SK-N-SH (cell line): ENCODE measurements at regions of chr6 and their contacts with region 1.

Region 1: GRCh38 chr6:51678905-51679620 is 408.4 kb downstream of the PKHD1 start:
- DNase-seq: peak; percentile 16
- H3K4me3 ChIP-seq: no peak overlapping the region
- H3K27ac ChIP-seq: peak overlapping the region in 1 of 2 experiments; percentile 99; a peak in 2 of 4 replicates
- H3K4me1 ChIP-seq: peaks cover 0 to 40% of the 10 kb centered on the region in 2 experiments; a peak in 2 of 4 replicates
- H3K27me3 ChIP-seq: no peaks in the 10 kb centered on the region
- CTCF ChIP-seq: no peak
- EP300 ChIP-seq: peak in 1 of 2 experiments; percentile 98; a peak in 2 of 4 replicates
- RAD21 ChIP-seq: peak; percentile 45

Region 2: DNA sequence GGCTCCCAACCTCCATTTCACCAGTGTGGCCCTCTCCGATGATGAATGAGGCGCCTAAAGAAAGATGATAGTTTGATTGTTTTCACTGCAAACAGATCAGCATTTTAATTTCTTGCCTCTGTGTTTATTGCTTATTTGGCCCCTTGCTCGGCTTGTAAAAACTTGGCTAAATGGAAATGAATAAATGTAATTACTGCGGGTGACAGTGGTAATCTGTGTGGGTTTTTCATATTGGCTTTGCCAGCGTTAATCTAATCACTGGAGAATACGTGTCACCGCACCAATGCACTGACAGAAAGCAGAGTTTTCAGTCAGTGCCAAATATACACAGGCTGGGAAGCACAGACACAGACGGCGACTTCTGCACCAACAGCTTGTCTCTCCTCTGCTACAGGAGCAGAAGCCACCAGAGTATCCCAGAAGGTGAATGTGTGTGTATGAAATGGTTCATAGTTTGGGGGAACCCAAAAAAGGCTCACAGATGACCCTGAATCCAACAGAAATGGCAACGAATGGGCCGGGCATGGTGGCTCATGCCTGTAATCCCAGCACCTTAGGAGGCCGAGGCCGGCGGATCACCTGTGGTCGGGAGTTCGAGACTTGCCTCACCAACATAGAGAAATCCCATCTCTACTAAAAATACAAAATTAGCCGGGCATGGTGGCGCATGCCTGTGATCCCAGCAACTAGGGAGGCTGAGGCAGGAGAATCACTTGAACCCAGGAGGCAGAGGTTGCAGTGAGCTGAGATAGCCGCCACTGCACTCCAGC is 125.6 kb before region 1 on chr6:
- CTCF ChIA-PET with region 1: interaction called, 8 read pairs
- POLR2A ChIA-PET with region 1: interaction called, 31 read pairs
- DNase-seq: peak; percentile 44
- H3K4me3 ChIP-seq: no peak overlapping the region
- H3K27ac ChIP-seq: peak overlapping the region in 1 of 2 experiments; percentile 99; a peak in 2 of 4 replicates
- H3K4me1 ChIP-seq: peaks cover 0 to 31% of the 10 kb centered on the region in 2 experiments; a peak in 2 of 4 replicates
- H3K27me3 ChIP-seq: no peaks in the 10 kb centered on the region
- CTCF ChIP-seq: no peak
- EP300 ChIP-seq: peak in 1 of 2 experiments; percentile 98; a peak in 2 of 4 replicates
- RAD21 ChIP-seq: peak; percentile 42

Region 3: GRCh38 chr6:51578994-51579393 is 100.1 kb before region 1 on chr6:
- CTCF ChIA-PET with region 1: interaction called, 6 read pairs
- POLR2A ChIA-PET with region 1: interaction called, 14 read pairs
- DNase-seq: peak; percentile 66
- H3K4me3 ChIP-seq: no peak overlapping the region
- H3K27ac ChIP-seq: peak overlapping the region in 1 of 2 experiments; percentile 100; a peak in 2 of 4 replicates
- H3K4me1 ChIP-seq: peaks cover 0 to 8% of the 10 kb centered on the region in 2 experiments; a peak in 1 of 4 replicates
- H3K27me3 ChIP-seq: no peaks in the 10 kb centered on the region
- CTCF ChIP-seq: no peak
- EP300 ChIP-seq: peak in 1 of 2 experiments; percentile 98; a peak in 2 of 4 replicates
- RAD21 ChIP-seq: peak; percentile 40

Region 4: DNA sequence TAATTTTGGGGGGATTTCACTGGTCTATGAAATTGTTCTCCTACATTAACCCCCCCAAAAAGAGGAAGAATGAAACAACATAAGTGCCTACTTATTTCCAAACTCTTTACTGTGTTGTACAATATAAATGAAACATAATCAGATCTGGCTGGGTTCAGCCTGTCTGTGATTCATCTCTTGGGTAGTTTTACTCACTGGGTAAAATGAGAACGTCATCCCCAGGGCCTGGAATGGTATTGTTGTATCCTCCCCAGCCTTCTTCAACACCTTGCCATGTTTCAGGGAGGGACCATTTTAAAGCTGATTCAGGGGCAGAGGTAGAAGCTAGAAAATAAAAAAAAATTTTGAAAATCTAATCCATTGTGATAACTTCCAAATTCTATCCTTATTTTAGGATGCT is 151.6 kb after region 1 on chr6:
- CTCF ChIA-PET with region 1: no interaction called
- POLR2A ChIA-PET with region 1: no interaction called
- DNase-seq: no peak
- H3K4me3 ChIP-seq: no peak overlapping the region
- H3K27ac ChIP-seq: no peak overlapping the region
- H3K4me1 ChIP-seq: no peaks in the 10 kb centered on the region
- H3K27me3 ChIP-seq: no peaks in the 10 kb centered on the region
- CTCF ChIP-seq: no peak
- EP300 ChIP-seq: no peak
- RAD21 ChIP-seq: no peak